ENCODE measurements at regions of chr20 and their contacts with region 1.

Region 1: DNA sequence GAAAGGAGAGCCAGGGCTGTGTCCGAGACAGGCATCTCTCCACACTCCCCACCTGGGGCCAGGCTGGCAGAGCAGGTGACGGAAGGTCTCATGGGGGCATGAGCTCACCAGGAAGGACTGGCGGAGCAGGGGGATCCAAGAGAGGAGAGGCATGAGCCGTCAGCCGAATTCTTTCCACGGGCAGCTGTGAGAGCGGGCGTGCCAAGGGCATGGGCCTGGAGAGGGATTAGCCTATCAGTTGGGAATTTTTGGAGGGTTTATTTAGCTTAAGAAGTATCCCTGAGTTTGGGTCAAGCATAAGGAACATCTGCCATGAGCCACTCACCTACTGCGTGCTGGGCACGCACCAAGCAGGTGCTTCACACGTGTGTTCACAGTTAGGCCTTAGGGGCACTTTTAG is 60.2 kb upstream of the ZNFX1 start:
- DNase-seq: no peak
- ATAC-seq: no peak
- H3K4me3 ChIP-seq: no peak overlapping the region
- H3K27ac ChIP-seq: no peak overlapping the region
- H3K4me1 ChIP-seq: peaks cover 6% of the 10 kb centered on the region; the same call in 1 of the 2 replicates
- H3K27me3 ChIP-seq: no peaks in the 10 kb centered on the region
- CTCF ChIP-seq: no peak

Region 2: DNA sequence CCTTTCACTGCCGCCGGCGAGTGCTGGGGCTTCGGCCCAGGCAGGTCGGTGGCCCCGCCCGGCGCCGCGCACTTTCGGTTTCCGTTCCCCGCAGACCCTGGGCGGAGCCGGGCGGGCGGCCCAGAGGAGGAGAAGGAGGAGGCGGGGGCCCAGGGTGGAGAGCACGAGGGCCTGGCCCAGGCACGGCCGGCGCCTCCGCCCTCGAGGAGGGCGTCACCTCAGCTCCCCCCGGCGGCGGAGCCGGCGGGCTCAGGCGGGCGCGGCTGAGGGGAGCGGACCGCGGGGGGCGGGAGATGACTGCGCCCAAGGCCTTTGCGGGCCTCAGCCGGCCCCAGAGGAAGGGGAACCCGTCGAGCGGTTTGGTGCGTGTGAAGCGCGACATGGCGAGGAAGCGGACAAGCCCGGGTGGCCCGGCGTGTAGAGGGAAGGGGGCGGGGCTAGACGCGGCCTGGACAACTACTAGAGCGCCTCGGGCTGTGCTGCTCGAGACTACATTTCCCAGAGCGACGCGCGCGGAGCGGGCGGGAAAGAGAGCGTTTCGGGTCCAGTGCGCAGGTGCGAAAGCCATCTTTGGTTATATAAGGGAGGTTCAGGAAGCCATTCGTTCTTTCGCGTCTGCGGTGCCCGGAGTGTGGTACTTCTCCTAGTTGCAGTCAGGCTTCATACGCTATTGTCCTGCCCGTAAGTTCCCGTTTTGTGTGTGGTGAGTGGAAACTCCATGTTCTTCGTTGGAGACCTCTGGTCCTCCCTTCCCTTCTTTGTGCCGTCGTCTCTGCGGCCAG is 59.8 kb before region 1 on chr20 and contains the start of gene ZNFX1:
- CTCF ChIA-PET with region 1: no interaction called
- POLR2A ChIA-PET with region 1: no interaction called
- intact Hi-C with region 1: no loop called
- DNase-seq: peak; percentile 100
- ATAC-seq: peak; percentile 88
- H3K4me3 ChIP-seq: peak within 1 kb of the TSS; percentile 89
- H3K27ac ChIP-seq: peak within 1 kb of the TSS; percentile 85
- H3K4me1 ChIP-seq: peaks cover 54% of the 10 kb centered on the region
- H3K27me3 ChIP-seq: no peaks in the 10 kb centered on the region
- CTCF ChIP-seq: peak; percentile 20; the same call in 1 of the 2 replicates
- total RNA-seq, gene ZNFX1: 18.8 and 18.9 TPM in 2 replicates

Region 3: GRCh38 chr20:49484180-49485140 is 146.4 kb after region 1 on chr20:
- CTCF ChIA-PET with region 1: interaction called, 14 read pairs
- POLR2A ChIA-PET with region 1: no interaction called
- intact Hi-C with region 1: loop called (anchors 1 kb)
- DNase-seq: peak; percentile 90
- ATAC-seq: peak; percentile 97
- H3K4me3 ChIP-seq: peak overlapping the region; percentile 67
- H3K27ac ChIP-seq: no peak overlapping the region
- H3K4me1 ChIP-seq: no peaks in the 10 kb centered on the region; the same call in 1 of the 2 replicates
- H3K27me3 ChIP-seq: peaks cover 36% of the 10 kb centered on the region
- CTCF ChIP-seq: peak; percentile 91

Region 4: DNA sequence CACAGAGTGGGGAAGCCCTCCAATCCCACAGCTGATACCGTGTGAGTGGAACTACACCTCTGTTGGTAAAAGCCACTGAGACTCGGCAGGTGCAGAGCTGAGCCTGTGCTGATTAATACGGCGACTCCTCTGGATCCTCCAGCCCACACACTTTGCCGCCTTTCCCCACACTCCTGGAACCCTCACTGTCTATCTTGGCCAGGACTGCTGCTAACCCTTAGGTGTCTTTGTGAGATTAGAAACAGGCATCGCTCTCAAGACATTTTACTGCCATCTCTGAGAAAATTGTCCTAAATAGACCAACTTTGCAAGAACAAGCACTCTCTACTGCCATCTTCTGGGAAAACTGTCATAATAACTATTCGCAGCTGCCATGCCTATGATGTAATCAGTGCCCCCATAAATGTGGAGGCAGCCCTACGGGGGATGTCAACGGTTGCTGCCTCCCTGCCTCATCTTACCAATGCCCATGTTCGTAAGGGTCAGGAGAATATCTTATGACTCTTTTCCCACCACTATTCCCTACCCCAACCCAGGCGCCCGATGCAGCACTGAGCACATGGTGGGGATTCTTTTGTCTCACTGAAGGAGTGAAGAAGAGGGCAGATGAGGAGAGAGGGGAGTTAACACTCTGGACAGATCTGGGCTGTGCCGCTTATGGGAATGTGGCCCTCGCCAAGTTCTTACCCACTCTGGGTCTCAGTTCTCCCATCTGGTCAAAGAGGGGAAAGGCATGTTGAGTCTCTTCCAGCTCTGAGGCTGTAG is 170.6 kb after region 1 on chr20:
- CTCF ChIA-PET with region 1: interaction called, 4 read pairs
- POLR2A ChIA-PET with region 1: no interaction called
- intact Hi-C with region 1: loop called (anchors 1 kb)
- DNase-seq: peak; percentile 80
- ATAC-seq: peak; percentile 67
- H3K4me3 ChIP-seq: peak overlapping the region; percentile 23; the same call in 1 of the 2 replicates
- H3K27ac ChIP-seq: no peak overlapping the region
- H3K4me1 ChIP-seq: peaks cover 6% of the 10 kb centered on the region; the same call in 1 of the 2 replicates
- H3K27me3 ChIP-seq: peaks cover 74% of the 10 kb centered on the region
- CTCF ChIP-seq: peak; percentile 87

Region 5: GRCh38 chr20:49534255-49534712 is 196.2 kb after region 1 on chr20:
- CTCF ChIA-PET with region 1: no interaction called
- POLR2A ChIA-PET with region 1: interaction called, 3 read pairs
- intact Hi-C with region 1: loop called (anchors 1 kb)
- DNase-seq: peak; percentile 88
- ATAC-seq: peak; percentile 85
- H3K4me3 ChIP-seq: no peak overlapping the region
- H3K27ac ChIP-seq: no peak overlapping the region
- H3K4me1 ChIP-seq: peaks cover 14% of the 10 kb centered on the region
- H3K27me3 ChIP-seq: peaks cover 15% of the 10 kb centered on the region
- CTCF ChIP-seq: peak; percentile 98

Region 6: GRCh38 chr20:49631061-49631788 is 293.2 kb after region 1 on chr20:
- CTCF ChIA-PET with region 1: no interaction called
- POLR2A ChIA-PET with region 1: no interaction called
- intact Hi-C with region 1: no loop called
- DNase-seq: no peak
- ATAC-seq: 0 out of 2 replicates have a peak, but pooled peaks have one; percentile 16
- H3K4me3 ChIP-seq: no peak overlapping the region
- H3K27ac ChIP-seq: no peak overlapping the region
- H3K4me1 ChIP-seq: no peaks in the 10 kb centered on the region
- H3K27me3 ChIP-seq: no peaks in the 10 kb centered on the region
- CTCF ChIP-seq: no peak

Region 7: GRCh38 chr20:49706630-49707091 is 368.6 kb after region 1 on chr20:
- CTCF ChIA-PET with region 1: no interaction called
- POLR2A ChIA-PET with region 1: no interaction called
- intact Hi-C with region 1: no loop called
- DNase-seq: no peak
- ATAC-seq: peak; percentile 54
- H3K4me3 ChIP-seq: no peak overlapping the region
- H3K27ac ChIP-seq: no peak overlapping the region
- H3K4me1 ChIP-seq: peaks cover 16% of the 10 kb centered on the region
- H3K27me3 ChIP-seq: no peaks in the 10 kb centered on the region
- CTCF ChIP-seq: no peak